ENCODE measurements at regions of chr1 and their contacts with region 1.

Region 1: DNA sequence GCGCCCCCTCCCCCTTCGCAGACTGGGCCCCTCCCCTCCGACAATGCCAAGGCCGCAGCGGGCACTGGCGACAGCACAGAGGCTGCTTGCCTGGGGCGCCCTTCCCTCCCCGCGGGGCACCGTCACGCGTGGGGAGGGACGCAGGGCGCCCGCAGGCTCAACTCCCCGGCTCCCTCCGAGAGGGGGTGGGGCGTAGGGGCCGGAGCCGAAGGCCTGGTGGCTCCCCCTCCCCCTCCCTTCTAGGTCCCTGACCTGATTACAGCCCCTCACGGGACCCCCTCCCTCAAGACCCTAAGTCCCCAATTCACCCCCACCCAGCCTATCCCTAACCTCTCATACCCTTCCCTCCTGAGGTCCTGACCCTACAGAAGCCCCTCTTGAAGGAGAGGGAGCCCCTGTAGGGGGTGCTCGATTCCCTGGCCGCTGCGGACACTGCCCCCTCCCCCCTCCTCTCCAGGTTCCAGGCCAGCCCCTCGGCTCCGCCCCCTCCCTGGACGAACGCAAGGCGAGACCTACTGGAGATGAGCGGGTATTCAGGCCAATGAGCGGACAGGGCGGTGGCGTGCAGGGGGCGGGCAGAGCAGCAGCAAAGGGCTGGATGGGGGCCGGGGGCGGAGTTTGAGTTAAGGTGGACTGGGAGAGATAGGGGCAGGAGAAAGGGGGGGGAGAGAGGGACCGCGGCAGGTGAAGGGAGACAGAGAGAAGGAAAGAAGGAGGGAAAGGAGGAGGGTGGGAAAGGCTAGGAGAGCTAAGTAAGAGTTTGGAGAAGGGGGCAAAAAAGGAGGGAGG is 733 bp upstream of the ZBTB7B start:
- DNase-seq: peak; percentile 96 to 98 (median 98)
- H3K4me3 ChIP-seq: peak overlapping the region; percentile 39 to 95 (median 72)
- H3K27ac ChIP-seq: peak overlapping the region in 1 of 2 experiments; percentile 83
- H3K4me1 ChIP-seq: peaks cover 11 to 90% (median 88%) of the 10 kb centered on the region in 4 experiments
- H3K27me3 ChIP-seq: no peaks in the 10 kb centered on the region

Region 2: GRCh38 chr1:154955718-154956543 is 45.9 kb before region 1 on chr1 and contains the start of gene PBXIP1:
- CTCF ChIA-PET with region 1: interaction called, 49 read pairs
- POLR2A ChIA-PET with region 1: interaction called, 4 read pairs
- DNase-seq: peak; percentile 94 to 96 (median 94)
- H3K4me3 ChIP-seq: peak within 1 kb of the TSS; percentile 33 to 92 (median 81)
- H3K27ac ChIP-seq: peak within 1 kb of the TSS; percentile 100
- H3K4me1 ChIP-seq: peaks cover 29 to 74% (median 69%) of the 10 kb centered on the region in 4 experiments
- H3K27me3 ChIP-seq: no peaks in the 10 kb centered on the region

Region 3: DNA sequence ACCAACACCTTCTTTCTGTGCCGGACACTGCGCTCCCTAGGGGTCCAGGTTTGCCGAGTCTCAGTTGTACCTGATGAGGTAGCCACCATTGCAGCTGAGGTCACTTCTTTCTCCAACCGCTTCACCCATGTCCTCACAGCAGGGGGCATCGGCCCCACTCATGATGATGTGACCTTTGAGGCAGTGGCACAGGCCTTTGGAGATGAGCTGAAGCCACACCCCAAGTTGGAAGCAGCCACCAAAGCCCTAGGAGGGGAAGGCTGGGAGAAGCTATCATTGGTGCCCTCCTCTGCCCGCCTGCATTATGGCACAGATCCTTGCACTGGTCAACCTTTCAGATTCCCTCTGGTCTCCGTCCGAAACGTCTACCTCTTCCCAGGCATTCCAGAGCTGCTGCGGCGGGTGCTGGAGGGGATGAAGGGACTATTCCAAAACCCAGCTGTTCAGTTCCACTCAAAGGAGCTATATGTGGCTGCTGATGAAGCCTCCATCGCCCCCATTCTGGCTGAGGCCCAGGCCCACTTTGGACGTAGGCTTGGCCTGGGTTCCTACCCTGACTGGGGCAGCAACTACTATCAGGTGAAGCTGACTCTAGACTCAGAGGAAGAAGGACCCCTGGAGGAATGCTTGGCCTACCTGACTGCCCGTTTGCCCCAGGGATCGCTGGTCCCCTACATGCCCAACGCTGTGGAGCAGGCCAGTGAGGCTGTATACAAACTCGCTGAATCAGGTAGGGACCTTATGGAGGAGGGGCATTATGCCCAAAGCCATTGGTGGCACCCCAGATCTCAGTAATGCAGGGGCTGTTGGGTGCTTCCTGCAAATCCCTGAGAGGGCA is 13.5 kb before region 1 on chr1:
- CTCF ChIA-PET with region 1: interaction called, 320 read pairs
- POLR2A ChIA-PET with region 1: no interaction called
- DNase-seq: peak in 1 of 3 donors; percentile 32
- H3K4me3 ChIP-seq: no peak overlapping the region
- H3K27ac ChIP-seq: no peak overlapping the region
- H3K4me1 ChIP-seq: peaks cover 4 to 21% (median 12%) of the 10 kb centered on the region in 4 experiments
- H3K27me3 ChIP-seq: no peaks in the 10 kb centered on the region

Region 4: DNA sequence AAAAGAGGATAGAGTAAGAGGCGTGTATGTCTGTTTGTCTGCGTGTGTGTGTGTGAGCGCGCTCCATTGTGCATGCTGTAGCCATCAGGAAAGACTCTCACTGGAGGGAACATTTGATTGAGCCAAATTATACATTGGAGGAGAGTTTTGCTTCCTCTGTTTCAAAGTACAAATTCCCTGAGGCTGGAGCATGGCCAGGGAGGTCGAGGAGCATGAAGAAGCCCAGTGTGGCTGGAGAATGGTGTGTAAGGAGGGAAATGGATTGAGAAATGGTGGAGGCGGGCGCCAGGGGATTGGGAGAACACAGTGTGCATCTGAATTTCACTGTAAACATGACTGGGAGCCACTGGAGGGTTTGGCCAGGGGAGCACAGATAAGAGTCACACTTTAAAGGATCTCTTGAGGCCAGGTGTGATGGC is 103.7 kb after region 1 on chr1:
- CTCF ChIA-PET with region 1: no interaction called
- POLR2A ChIA-PET with region 1: no interaction called
- DNase-seq: no peak
- H3K4me3 ChIP-seq: no peak overlapping the region
- H3K27ac ChIP-seq: no peak overlapping the region
- H3K4me1 ChIP-seq: peaks cover 0 to 22% (median 16%) of the 10 kb centered on the region in 4 experiments
- H3K27me3 ChIP-seq: no peaks in the 10 kb centered on the region